H1 (cell line): ENCODE measurements at regions of chr11 and their contacts with region 1.

Region 1: DNA sequence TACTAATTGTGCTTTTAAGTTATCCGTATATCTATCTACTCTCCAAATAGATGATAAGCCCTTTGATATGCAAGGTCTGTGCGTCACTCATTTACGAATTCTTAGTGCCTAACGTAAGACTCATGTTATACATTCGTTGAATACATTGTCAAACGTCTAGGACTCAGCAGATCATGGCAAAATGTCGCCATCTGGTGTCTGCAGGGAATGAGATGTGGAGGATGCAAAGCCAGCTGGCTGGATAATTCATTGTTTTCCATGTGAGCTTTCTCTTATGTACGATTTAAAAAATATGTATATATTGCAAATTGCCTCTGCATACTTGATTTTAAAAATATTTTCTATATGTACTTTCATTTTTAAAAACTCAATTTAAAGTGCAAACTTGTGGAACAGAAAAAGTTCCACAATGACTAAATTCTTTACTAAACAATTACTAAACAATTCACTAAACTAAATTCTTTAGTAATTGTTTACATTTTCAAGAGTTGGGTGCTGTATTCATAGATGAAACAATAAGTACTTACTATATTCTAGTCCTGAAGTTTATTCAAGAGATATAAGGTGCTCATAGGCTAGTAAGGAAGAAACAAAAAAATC is 33.8 kb downstream of the ZNF202 start:
- DNase-seq: peak; percentile 15 to 71
- H3K4me3 ChIP-seq: no peak overlapping the region
- H3K27ac ChIP-seq: no peak overlapping the region
- H3K4me1 ChIP-seq: peaks cover 0 to 4% (median 0%) of the 10 kb centered on the region in 4 experiments; a peak in 2 of 7 replicates
- H3K27me3 ChIP-seq: no peaks in the 10 kb centered on the region
- CTCF ChIP-seq: peak; percentile 58 to 83 (median 81)
- EP300 ChIP-seq: no peak
- POLR2A ChIP-seq: no peak
- RAD21 ChIP-seq: peak; percentile 86 to 90

Region 2: DNA sequence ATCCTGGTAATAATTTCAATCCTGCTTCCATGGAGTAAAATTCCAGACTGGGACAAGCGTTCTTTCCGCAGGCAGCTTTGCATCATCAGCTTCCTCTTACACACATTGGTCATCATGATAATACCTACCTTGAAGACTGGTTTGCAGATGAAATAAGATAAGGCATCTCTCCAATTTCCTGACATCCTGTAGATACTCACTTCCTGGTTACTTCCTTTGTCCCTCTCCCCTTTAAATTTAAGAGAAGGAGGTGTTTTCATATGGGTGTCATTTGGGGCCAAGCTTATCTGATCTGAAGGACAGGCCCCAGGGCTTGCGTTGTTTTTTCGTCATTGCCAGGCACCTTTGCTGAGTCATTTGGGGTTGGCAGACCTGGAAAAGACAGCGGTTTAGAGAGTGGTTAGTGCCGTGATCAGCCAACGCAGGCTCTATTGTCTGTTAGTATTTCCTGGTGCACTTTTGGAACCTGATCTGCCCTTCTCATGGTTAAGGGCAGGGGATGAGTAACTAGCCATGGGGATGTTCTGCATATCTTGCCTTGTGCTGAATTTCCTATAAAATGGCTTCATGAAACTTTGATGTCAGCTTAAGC is 253.6 kb before region 1 on chr11:
- CTCF ChIA-PET with region 1: no interaction called
- POLR2A ChIA-PET with region 1: no interaction called
- DNase-seq: no peak
- H3K4me3 ChIP-seq: no peak overlapping the region
- H3K27ac ChIP-seq: no peak overlapping the region; the same call in 1 of the 2 replicates
- H3K4me1 ChIP-seq: peaks cover 0 to 7% (median 5%) of the 10 kb centered on the region in 4 experiments; a peak in 3 of 7 replicates
- H3K27me3 ChIP-seq: no peaks in the 10 kb centered on the region
- CTCF ChIP-seq: no peak
- EP300 ChIP-seq: no peak
- POLR2A ChIP-seq: no peak
- RAD21 ChIP-seq: no peak

Region 3: GRCh38 chr11:123628936-123629683 is 78.6 kb before region 1 on chr11:
- CTCF ChIA-PET with region 1: interaction called, 19 read pairs
- POLR2A ChIA-PET with region 1: interaction called, 4 read pairs
- DNase-seq: no peak
- H3K4me3 ChIP-seq: no peak overlapping the region
- H3K27ac ChIP-seq: no peak overlapping the region
- H3K4me1 ChIP-seq: peaks cover 0 to 3% (median 0%) of the 10 kb centered on the region in 4 experiments; a peak in 2 of 7 replicates
- H3K27me3 ChIP-seq: no peaks in the 10 kb centered on the region
- CTCF ChIP-seq: no peak
- EP300 ChIP-seq: no peak
- POLR2A ChIP-seq: peak in 1 of 2 experiments; percentile 34; a peak in 1 of 3 replicates
- RAD21 ChIP-seq: no peak

Region 4: DNA sequence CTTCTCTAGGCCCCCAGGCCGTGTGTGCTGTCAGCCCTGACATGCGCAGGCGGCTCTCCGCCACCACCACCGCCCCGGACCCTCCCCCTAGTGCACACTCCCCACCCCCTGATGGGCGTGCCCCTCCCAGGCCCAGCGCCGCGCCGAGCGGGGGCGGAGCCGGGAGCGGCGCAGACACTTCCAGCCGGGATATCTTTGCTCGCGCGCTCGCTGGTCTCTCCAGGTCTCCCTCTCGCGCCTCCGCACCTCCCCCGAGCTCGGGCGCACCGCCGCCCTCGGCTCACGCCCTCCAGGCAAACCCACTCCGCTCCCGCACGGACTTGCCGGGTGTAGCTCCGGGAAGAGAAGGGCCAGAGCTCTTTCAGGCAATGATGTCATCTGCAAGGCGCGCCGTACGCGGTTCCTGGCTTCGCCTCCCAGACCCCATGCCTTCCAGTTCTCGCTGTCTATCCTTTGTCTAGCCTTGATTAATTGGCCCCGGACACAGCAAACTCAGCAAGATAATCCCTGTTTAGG is 53.1 kb before region 1 on chr11 and contains the start of gene SCN3B:
- CTCF ChIA-PET with region 1: interaction called, 197 read pairs
- POLR2A ChIA-PET with region 1: no interaction called
- DNase-seq: peak in 1 of 2 experiments; percentile 91
- H3K4me3 ChIP-seq: peak within 1 kb of the TSS; percentile 75 to 80 (median 78)
- H3K27ac ChIP-seq: no peak within 1 kb of the TSS
- H3K4me1 ChIP-seq: peaks cover 0 to 3% (median 1%) of the 10 kb centered on the region in 4 experiments; a peak in 3 of 7 replicates
- H3K27me3 ChIP-seq: peaks cover 8 to 32% (median 21%) of the 10 kb centered on the region in 4 experiments
- CTCF ChIP-seq: no peak
- EP300 ChIP-seq: no peak
- POLR2A ChIP-seq: no peak
- RAD21 ChIP-seq: no peak
- total RNA-seq, gene SCN3B: 0.82 and 1.1 TPM in 2 replicates

Region 5: DNA sequence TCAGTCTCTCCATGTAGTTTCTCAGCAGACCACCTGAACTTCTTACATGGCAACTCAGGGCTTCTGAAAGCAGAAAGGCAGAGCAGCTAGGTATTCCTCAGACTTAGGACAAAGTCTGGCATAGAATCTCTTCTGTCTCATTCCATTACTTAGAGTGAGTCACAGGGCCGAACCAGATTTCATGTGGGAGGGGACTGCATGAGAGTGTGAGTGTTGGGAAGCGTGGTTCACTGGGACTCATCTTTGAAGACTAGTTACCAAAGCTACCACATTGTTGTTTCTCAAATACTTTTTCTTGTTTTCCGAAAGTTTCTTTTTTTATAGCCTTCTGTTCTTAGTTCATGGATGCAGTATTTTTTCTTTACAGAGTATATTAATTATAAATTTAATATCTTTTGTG is 17.2 kb before region 1 on chr11:
- CTCF ChIA-PET with region 1: interaction called, 27 read pairs
- POLR2A ChIA-PET with region 1: interaction called, 4 read pairs
- DNase-seq: no peak
- H3K4me3 ChIP-seq: no peak overlapping the region
- H3K27ac ChIP-seq: no peak overlapping the region
- H3K4me1 ChIP-seq: no peaks in the 10 kb centered on the region
- H3K27me3 ChIP-seq: no peaks in the 10 kb centered on the region
- CTCF ChIP-seq: no peak
- EP300 ChIP-seq: no peak
- POLR2A ChIP-seq: no peak
- RAD21 ChIP-seq: no peak

Region 6: GRCh38 chr11:123719452-123719851 is 11.7 kb after region 1 on chr11:
- CTCF ChIA-PET with region 1: interaction called, 13 read pairs
- POLR2A ChIA-PET with region 1: no interaction called
- DNase-seq: no peak
- H3K4me3 ChIP-seq: no peak overlapping the region
- H3K27ac ChIP-seq: no peak overlapping the region
- H3K4me1 ChIP-seq: no peaks in the 10 kb centered on the region
- H3K27me3 ChIP-seq: no peaks in the 10 kb centered on the region
- CTCF ChIP-seq: no peak
- EP300 ChIP-seq: no peak
- POLR2A ChIP-seq: no peak
- RAD21 ChIP-seq: no peak